PC-3 (cell line): ENCODE measurements at regions of chr1 and their contacts with region 1.

Region 1: DNA sequence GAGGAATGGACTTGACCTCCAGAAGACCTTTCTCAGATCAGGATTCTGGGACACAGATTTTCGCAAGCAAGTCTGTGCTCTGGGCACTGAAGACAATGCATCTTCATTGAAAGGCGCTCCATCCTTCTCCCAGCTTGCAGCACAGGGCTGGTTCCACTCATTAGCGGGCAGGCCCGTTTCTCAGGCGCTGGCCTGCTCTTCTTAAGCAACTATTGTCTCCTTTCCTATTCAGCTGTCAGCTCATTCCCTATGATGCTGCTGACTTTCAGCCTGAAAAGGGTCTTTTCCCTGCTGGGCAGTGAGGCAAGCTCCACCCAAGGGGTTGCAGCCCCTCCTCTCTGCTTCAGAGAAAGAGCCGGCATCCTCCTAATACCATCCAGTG is 91.9 kb upstream of the PLXNA2 start:
- DNase-seq: no peak
- ATAC-seq: no peak
- H3K4me3 ChIP-seq: no peak overlapping the region
- H3K27ac ChIP-seq: no peak overlapping the region
- H3K4me1 ChIP-seq: no peaks in the 10 kb centered on the region
- H3K27me3 ChIP-seq: no peaks in the 10 kb centered on the region
- CTCF ChIP-seq: no peak

Region 2: GRCh38 chr1:208318150-208318734 is 17.9 kb before region 1 on chr1:
- CTCF ChIA-PET with region 1: interaction called, 13 read pairs
- POLR2A ChIA-PET with region 1: no interaction called
- intact Hi-C with region 1: no loop called
- DNase-seq: peak; percentile 49
- ATAC-seq: no peak
- H3K4me3 ChIP-seq: no peak overlapping the region
- H3K27ac ChIP-seq: no peak overlapping the region
- H3K4me1 ChIP-seq: no peaks in the 10 kb centered on the region
- H3K27me3 ChIP-seq: peaks cover 44% of the 10 kb centered on the region
- CTCF ChIP-seq: no peak